Right ventricle myocardium inferior (tissue), 1 donor: ENCODE measurements at regions of chr6 and their contacts with region 1.

Region 1: DNA sequence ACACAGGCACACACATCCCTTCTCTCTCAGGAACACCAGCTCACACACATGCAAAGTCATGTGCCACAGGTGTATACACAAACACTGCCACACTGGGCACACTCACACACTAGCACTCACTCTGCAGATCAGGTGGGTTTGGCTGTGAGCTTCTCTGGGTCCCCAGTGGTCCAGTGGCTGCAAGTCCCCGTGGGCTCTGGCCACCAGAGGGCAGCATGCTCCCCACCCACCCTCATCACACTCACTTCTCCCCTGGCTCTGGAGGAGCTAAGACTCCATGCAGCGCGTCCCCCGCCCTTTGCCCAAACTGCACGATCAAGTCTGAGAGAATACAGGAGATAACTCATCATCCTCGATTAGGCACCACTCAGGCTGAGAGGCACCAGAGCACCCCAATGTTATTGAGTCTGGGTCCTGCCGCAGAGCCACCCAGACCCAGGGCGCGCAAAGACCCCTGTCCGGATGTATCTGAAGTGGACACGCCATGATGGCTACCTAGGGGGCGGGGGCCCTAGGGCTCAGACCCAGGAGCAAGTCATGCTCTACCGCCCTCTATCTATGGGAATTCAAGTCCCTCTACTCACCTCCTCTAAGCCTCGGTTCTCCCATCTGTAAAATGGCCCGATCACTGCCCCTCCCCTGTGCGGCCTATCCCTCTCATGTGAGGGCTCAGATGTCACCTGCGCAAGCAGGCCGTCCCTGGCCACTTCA is 90.5 kb downstream of the GRM4 start:
- DNase-seq: no peak
- ATAC-seq: peak; percentile 47

Region 2: DNA sequence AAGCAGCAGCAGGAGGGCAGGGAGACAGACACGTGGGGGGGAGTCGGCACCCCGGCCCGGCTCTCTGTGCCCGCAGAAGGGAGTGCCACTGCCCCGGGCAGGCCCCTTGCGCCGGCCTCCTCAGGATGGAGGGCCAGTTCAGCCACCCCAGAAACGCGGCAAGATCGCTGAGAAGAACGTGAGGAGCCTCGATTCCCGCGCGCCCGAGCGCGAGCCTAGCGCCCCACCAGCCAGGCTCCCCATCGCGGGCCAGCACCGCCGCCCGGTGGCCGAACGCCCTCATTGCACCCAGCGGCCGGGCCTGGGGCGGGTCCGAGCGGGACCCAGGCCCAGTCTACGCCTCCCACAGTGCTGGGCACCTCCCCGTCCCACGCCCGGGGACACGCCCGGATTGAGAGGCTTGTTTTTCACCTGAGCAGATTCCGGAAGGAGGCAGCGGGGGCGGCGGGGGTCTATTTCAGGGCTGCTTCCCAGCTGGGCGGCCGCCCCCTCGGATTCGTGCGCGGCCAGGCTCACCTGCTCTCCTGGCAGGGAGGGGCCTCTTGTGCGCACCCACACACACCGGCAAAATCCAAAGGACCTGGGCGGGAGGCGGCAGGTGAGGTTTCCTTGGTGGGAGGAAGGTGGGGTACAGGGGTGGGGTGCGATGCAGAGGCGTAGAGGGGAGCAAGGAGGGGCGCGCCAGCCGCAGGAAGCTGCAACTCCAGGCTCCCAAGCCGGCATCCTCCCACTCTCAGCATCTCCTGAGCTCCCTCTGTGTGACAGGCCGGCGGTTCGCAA is 99.5 kb after region 1 on chr6:
- intact Hi-C with region 1: loop called (anchors 2 kb)
- DNase-seq: no peak
- ATAC-seq: peak; percentile 63